ENCODE measurements at regions of chr7 and their contacts with region 1.

Region 1: GRCh38 chr7:108525985-108526767 is at the start of gene PNPLA8:
- DNase-seq: peak; percentile 100
- H3K4me3 ChIP-seq: peak within 1 kb of the TSS; percentile 69 to 95 (median 73)
- H3K27ac ChIP-seq: peak within 1 kb of the TSS; percentile 93
- H3K4me1 ChIP-seq: peaks cover 17% of the 10 kb centered on the region
- H3K27me3 ChIP-seq: no peaks in the 10 kb centered on the region
- CTCF ChIP-seq: no peak
- POLR2A ChIP-seq: peak; percentile 82
- total RNA-seq, gene PNPLA8: 17.6 and 19.9 TPM in 2 replicates

Region 2: DNA sequence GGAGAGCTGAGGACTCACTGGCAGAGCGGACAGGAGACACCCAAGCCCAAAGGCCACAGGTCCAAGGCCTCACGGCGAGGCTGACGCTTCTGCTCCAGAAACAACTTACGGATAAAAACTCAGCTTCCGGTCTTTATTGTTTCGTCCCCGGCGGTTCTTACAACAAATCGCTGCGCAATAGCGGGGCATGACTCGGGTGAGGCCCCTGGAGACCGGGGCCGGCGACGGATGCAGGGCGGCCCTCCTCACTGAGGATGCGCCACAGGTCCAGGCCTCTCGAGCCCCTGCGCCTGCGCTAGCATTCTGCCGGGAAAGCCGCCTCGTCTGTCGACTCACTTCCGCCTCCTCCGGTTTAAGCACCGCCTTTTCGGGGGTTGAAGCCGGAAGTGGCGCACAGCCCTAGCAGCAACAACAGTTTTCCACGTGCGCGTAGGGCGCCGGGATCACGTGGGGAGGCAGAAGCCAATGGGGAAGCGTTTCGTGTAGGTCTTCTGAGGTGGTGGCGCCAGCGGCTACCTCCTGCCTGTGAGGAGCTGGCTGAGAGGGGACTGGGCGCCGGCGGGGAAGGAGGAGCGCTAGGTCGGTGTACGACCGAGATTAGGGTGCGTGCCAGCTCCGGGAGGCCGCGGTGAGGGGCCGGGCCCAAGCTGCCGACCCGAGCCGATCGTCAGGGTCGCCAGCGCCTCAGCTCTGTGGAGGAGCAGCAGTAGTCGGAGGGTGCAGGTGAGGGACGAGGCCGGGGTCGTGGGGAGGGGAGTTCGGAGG is 43.4 kb after region 1 on chr7 and contains the starts of genes DNAJB9 and THAP5:
- CTCF ChIA-PET with region 1: no interaction called
- POLR2A ChIA-PET with region 1: interaction called, 9 read pairs
- dilution Hi-C with region 1: no loop called
- intact Hi-C with region 1: loop called (anchors 1 kb)
- DNase-seq: peak; percentile 100
- H3K4me3 ChIP-seq: peak within 1 kb of the TSS; percentile 63 to 99 (median 79)
- H3K27ac ChIP-seq: peak within 1 kb of the TSS; percentile 90
- H3K4me1 ChIP-seq: peaks cover 37% of the 10 kb centered on the region
- H3K27me3 ChIP-seq: no peaks in the 10 kb centered on the region
- CTCF ChIP-seq: peak in 1 of 2 donors; percentile 3
- POLR2A ChIP-seq: peak; percentile 75
- total RNA-seq, gene DNAJB9: 11.9 and 13.4 TPM in 2 replicates
- total RNA-seq, gene THAP5: 14.1 and 17.0 TPM in 2 replicates

Region 3: GRCh38 chr7:108605559-108606201 is 79.5 kb after region 1 on chr7:
- CTCF ChIA-PET with region 1: no interaction called
- POLR2A ChIA-PET with region 1: no interaction called
- dilution Hi-C with region 1: no loop called
- intact Hi-C with region 1: no loop called
- DNase-seq: no peak
- H3K4me3 ChIP-seq: no peak overlapping the region
- H3K27ac ChIP-seq: no peak overlapping the region
- H3K4me1 ChIP-seq: no peaks in the 10 kb centered on the region
- H3K27me3 ChIP-seq: peaks cover 2 to 12% of the 10 kb centered on the region in 2 experiments
- CTCF ChIP-seq: no peak
- POLR2A ChIP-seq: no peak